Right ventricle myocardium superior (tissue), 1 donor: ENCODE measurements at regions of chr10 and their contacts with region 1.

Region 1: DNA sequence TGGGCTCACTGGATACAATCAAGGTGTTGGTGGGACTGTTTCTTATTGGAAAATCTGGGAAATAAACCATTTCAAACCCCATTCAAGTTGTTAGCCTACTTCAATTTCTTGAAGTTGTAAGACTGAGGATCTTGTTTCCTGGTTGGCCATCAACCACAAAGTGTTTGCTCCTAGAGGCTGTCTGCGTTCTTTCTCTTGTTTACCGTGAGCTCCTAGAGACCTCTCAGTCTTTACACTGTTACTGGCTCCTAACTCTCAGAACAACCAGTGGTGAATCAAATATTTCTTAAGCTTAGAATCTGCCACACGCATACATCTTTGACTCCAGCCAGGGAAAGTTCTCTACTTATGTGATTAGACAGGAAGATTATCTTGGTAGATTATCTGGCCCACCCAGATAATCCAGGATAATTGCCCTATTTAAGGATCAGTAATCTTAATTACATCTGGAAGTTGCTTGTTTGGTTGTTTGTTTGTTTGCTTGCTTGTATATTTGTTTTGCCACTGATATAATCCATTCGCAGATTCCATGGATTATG is 798.7 kb downstream of the IPMK start:
- DNase-seq: no peak
- ATAC-seq: no peak

Region 2: DNA sequence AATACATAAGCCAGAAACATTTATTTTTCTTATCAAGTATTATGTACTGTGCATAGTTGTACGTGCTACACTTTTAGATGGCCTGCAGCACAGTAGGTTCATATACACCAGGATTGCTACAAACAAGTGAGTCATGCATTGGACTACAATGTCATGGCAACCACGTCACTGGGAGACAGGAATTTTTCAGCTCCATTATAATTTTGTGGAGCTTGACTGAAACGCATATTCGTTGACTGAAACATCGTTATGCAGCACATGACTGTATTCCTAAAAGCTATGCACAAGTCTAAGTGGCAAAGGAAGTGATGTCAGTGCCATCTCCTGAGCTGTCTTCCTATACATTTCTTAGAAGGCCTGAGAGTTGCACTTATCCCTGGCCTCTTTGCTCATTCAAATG is 73.0 kb before region 1 on chr10:
- intact Hi-C with region 1: loop called (anchors 10 kb)
- DNase-seq: no peak
- ATAC-seq: no peak